Right lobe of liver (tissue), 6 donors: ENCODE measurements at regions of chr10 and their contacts with region 1.

Region 1: DNA sequence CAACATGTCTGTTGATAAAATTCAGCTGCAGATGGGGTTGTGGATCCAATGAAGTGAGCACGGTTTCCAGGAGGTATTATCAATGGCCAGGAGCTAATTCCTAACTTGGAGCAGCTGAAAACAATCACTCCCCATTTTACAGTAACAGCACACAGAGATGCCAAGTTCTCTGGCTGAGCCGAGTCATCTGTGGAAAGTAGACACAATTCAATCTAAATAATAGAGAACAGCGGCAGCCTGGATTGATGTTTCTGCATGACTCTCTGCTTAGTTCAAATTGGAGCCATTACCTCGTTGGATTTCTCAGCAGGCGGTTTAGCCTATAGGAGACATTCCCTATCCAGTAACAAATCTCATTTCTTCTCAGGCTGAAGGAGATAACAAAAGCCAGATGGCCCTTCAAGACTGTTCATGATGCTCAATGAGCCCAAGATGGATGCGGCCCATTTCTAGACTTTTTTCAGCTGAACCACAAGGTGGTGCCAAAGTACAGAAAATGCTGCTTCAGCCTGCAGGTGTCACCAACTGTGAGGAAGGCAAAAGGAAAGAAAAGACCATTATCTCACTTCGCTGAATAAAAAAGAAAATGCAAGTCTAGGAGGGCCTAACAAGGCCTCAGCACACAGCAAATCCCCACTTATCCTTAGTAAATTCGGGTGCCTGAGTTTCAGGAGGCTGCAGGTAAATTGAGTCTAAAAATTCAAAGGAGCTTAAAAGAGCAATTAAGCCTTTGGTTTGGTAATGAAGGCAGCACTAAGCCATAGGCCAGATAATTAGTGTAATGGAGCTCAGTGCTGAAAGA is 83.7 kb downstream of the SLC16A9 start:
- DNase-seq: no peak
- ATAC-seq: peak; percentile 90 to 95 (median 92)
- H3K4me3 ChIP-seq: no peak overlapping the region
- H3K27ac ChIP-seq: no peak overlapping the region
- H3K4me1 ChIP-seq: peaks cover 0 to 4% (median 0%) of the 10 kb centered on the region in 4 donors
- H3K27me3 ChIP-seq: no peaks in the 10 kb centered on the region
- CTCF ChIP-seq: peak; percentile 75 to 91 (median 79)
- POLR2A ChIP-seq: no peak

Region 2: GRCh38 chr10:59829601-59830000 is 203.7 kb after region 1 on chr10:
- intact Hi-C with region 1: loop called in 1 of 2 experiments (anchors 10 kb)
- DNase-seq: no peak
- ATAC-seq: no peak
- H3K4me3 ChIP-seq: no peak overlapping the region
- H3K27ac ChIP-seq: no peak overlapping the region
- H3K4me1 ChIP-seq: peaks cover 0 to 11% (median 0%) of the 10 kb centered on the region in 4 donors
- H3K27me3 ChIP-seq: no peaks in the 10 kb centered on the region
- CTCF ChIP-seq: no peak
- POLR2A ChIP-seq: no peak

Region 3: GRCh38 chr10:60032723-60033122 is 406.8 kb after region 1 on chr10:
- intact Hi-C with region 1: loop called (anchors 5 to 10 kb)
- DNase-seq: peak in 2 of 3 donors; percentile 21 to 60
- ATAC-seq: peak; percentile 93 to 98 (median 97)
- H3K4me3 ChIP-seq: no peak overlapping the region
- H3K27ac ChIP-seq: peak overlapping the region in 1 of 3 donors; percentile 26
- H3K4me1 ChIP-seq: peaks cover 0 to 5% (median 0%) of the 10 kb centered on the region in 4 donors
- H3K27me3 ChIP-seq: no peaks in the 10 kb centered on the region
- CTCF ChIP-seq: peak; percentile 52 to 77 (median 69)
- POLR2A ChIP-seq: no peak